Natural killer cell (primary cell): ENCODE measurements at regions of chr5 and their contacts with region 1.

Region 1: GRCh38 chr5:119328753-119329602 is 26.8 kb upstream of the TNFAIP8 start:
- DNase-seq: peak; percentile 48 to 82
- ATAC-seq: peak; percentile 74 to 76 (median 75)
- H3K4me3 ChIP-seq: no peak overlapping the region
- H3K4me3 Mint-ChIP-seq: peak overlapping the region; percentile 70
- H3K27ac ChIP-seq: peak overlapping the region; percentile 62
- H3K27ac Mint-ChIP-seq: peak overlapping the region; percentile 86 to 88
- H3K4me1 ChIP-seq: peaks cover 71% of the 10 kb centered on the region
- H3K4me1 Mint-ChIP-seq: peaks cover 80 to 87% of the 10 kb centered on the region in 2 donors
- H3K27me3 ChIP-seq: no peaks in the 10 kb centered on the region
- H3K27me3 Mint-ChIP-seq: no peaks in the 10 kb centered on the region
- CTCF ChIP-seq: no peak

Region 2: GRCh38 chr5:119070828-119071572 is 258.0 kb before region 1 on chr5 and contains the start of gene DMXL1:
- intact Hi-C with region 1: loop called (anchors 10 kb)
- DNase-seq: peak; percentile 96 to 99
- ATAC-seq: peak; percentile 87 to 96 (median 89)
- H3K4me3 ChIP-seq: peak within 1 kb of the TSS; percentile 79
- H3K4me3 Mint-ChIP-seq: peak within 1 kb of the TSS; percentile 100
- H3K27ac ChIP-seq: peak within 1 kb of the TSS; percentile 93
- H3K27ac Mint-ChIP-seq: peak within 1 kb of the TSS; percentile 98 to 100
- H3K4me1 ChIP-seq: peaks cover 19% of the 10 kb centered on the region
- H3K4me1 Mint-ChIP-seq: peaks cover 39 to 41% of the 10 kb centered on the region in 2 donors
- H3K27me3 ChIP-seq: no peaks in the 10 kb centered on the region
- H3K27me3 Mint-ChIP-seq: no peaks in the 10 kb centered on the region
- CTCF ChIP-seq: no peak
- total RNA-seq, gene DMXL1: 36.7 to 43.0 (median 39.9) TPM

Region 3: DNA sequence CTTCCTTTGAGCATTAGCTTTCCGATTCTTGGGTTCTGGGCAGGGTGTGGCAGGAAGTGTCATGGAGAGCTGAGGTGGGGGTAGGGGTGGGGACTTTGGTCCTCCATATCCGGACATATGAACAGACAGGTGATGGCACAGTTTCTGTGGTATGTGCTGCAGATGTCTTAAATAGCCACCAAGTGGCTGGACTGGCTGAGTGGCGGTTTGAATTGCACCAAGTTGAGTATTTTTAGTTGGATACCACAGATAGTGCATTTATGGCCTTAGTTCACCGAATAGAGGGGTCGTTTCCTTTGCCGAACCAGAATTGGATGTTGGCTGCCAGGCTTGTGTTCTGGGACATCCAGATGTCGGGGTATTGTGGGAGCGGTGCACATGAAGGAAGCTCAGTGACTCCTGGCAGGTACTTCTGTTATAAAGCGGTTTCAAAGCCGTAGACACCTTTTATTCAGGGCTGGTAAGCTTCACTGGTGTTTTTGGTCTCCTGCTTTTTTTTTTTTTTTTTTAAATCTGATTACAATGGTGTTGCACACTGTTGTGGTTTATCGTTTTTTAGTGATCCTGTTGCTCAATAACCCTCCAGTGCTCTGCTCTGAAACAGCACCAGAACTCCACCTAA is 11.7 kb after region 1 on chr5:
- intact Hi-C with region 1: loop called (anchors 1 kb)
- DNase-seq: peak in 1 of 2 donors; percentile 78
- ATAC-seq: peak; percentile 32 to 54 (median 46)
- H3K4me3 ChIP-seq: peak overlapping the region; percentile 2
- H3K4me3 Mint-ChIP-seq: peak overlapping the region; percentile 93
- H3K27ac ChIP-seq: peak overlapping the region; percentile 70
- H3K27ac Mint-ChIP-seq: peak overlapping the region; percentile 86 to 88
- H3K4me1 ChIP-seq: peaks cover 73% of the 10 kb centered on the region
- H3K4me1 Mint-ChIP-seq: peaks cover 93 to 96% of the 10 kb centered on the region in 2 donors
- H3K27me3 ChIP-seq: no peaks in the 10 kb centered on the region
- H3K27me3 Mint-ChIP-seq: no peaks in the 10 kb centered on the region
- CTCF ChIP-seq: no peak

Region 4: GRCh38 chr5:119537704-119538103 is 208.7 kb after region 1 on chr5:
- intact Hi-C with region 1: no loop called
- DNase-seq: no peak
- ATAC-seq: no peak
- H3K4me3 ChIP-seq: no peak overlapping the region
- H3K4me3 Mint-ChIP-seq: no peak overlapping the region
- H3K27ac ChIP-seq: no peak overlapping the region
- H3K27ac Mint-ChIP-seq: no peak overlapping the region
- H3K4me1 ChIP-seq: no peaks in the 10 kb centered on the region
- H3K4me1 Mint-ChIP-seq: no peaks in the 10 kb centered on the region
- H3K27me3 ChIP-seq: no peaks in the 10 kb centered on the region
- H3K27me3 Mint-ChIP-seq: no peaks in the 10 kb centered on the region
- CTCF ChIP-seq: no peak